ENCODE measurements at regions of chr17 and their contacts with region 1.

Region 1: DNA sequence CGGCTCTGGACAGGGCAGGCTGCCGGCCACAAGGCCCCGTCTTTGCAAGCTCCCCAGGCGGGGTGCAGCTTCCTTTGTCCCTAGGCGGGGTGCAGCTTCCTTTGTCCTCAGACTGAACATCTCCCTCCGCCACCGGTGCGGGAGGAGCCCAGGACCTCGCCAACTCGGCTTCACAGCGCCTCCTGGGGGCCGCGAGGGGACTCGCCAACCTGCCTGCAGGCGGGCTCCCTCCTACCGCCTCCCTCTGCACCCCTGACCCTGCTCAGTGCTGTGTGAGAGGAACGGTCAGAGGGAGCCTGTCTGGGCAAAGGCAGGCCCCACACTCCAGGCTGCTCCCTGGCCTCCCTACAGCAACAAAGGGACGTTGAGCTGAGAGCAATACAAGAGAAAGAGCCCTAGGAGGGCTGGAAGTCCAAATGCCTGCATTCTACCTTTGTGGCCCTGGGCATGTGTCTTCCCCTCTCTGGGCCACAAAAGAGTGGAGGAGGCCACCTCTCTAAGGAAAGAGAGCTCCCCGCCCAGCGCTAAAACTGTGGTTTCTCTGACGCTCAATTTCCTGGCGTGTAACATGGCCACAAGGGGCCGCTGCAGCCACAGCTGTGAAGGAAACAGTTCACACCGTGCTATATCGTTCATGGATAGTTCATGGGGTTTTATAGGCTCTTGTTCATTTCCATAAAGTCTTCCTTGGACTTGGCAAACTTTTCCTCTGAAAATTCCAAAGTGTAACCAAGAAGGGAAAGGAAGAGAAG is 20.9 kb upstream of the KRT19 start:
- DNase-seq: peak; percentile 91
- ATAC-seq: peak; percentile 86
- H3K4me3 Mint-ChIP-seq: no peak overlapping the region
- H3K27ac Mint-ChIP-seq: peak overlapping the region; percentile 47
- H3K4me1 Mint-ChIP-seq: peaks cover 17% of the 10 kb centered on the region
- H3K27me3 Mint-ChIP-seq: peaks cover 7% of the 10 kb centered on the region

Region 2: DNA sequence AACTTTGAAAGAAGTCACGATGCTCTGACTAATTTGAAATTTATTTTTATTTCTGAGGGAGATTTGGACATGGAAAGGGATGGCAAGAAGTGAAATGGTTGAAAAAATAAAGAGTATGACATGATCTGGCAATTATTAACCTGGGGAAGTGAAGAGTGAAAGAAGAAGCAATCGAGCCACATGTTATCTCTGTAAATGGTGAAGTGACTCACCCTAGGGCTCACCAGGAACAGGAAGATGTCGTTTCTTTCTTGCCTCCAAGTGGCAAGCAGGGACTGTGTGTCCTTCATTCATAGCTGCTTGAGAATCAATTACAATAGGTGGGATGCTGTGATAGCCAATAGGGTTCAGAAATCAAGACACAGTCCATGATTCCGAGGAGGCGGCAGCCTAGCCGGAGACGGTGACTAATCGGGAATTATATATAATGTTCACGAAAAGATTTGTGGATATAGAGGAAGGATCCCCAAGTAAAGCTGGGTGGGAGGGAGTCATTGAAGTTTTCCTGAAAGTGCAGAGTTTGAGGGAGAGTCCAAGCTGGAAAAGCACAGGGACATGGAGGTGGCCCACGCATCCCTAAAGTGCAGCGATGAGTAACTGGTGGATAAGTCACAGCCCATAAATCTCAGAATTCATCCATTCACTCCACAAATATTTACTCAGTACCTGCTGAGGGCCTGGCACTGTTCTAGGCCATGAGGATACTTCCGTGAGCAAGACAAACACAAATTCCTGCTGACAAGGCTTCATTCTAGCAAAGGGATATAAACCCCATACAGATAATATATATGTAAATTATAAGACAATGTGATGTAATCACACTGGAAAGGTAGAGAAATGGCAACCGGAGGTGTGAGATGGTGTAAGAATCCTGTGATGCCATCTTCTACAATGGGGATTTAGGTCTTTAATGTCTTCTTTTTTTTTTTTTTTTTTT is 645.6 kb before region 1 on chr17:
- CTCF ChIA-PET with region 1: interaction called, 20 read pairs
- DNase-seq: no peak
- ATAC-seq: no peak
- H3K4me3 Mint-ChIP-seq: no peak overlapping the region
- H3K27ac Mint-ChIP-seq: no peak overlapping the region
- H3K4me1 Mint-ChIP-seq: peaks cover 10% of the 10 kb centered on the region
- H3K27me3 Mint-ChIP-seq: peaks cover 51% of the 10 kb centered on the region

Region 3: GRCh38 chr17:41464682-41465081 is 84.3 kb before region 1 on chr17:
- CTCF ChIA-PET with region 1: no interaction called
- DNase-seq: no peak
- ATAC-seq: no peak
- H3K4me3 Mint-ChIP-seq: no peak overlapping the region
- H3K27ac Mint-ChIP-seq: no peak overlapping the region
- H3K4me1 Mint-ChIP-seq: no peaks in the 10 kb centered on the region
- H3K27me3 Mint-ChIP-seq: peaks cover 4% of the 10 kb centered on the region

Region 4: GRCh38 chr17:41486809-41487720 is 62.0 kb before region 1 on chr17:
- CTCF ChIA-PET with region 1: interaction called, 10 read pairs
- DNase-seq: peak; percentile 52
- ATAC-seq: no peak
- H3K4me3 Mint-ChIP-seq: no peak overlapping the region
- H3K27ac Mint-ChIP-seq: no peak overlapping the region
- H3K4me1 Mint-ChIP-seq: no peaks in the 10 kb centered on the region
- H3K27me3 Mint-ChIP-seq: peaks cover 5% of the 10 kb centered on the region

Region 5: DNA sequence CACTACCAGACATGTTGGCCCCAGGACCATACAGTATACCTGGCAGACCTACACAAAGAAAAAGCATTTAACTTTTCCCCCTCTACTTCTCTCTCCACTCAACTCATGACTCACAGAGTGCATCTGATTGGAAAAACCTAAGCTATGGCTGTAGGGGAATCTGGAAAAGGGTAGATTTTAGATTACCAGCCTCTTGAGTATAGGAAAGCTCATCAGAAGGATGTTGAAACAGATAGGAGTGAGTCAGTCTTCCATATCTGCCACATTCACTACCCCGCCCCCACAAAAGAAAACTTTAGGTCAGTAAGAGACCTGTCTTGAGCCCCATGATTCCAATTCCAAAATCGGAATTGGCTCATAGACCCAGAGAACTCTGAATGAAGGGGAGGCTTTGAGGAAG is 10.5 kb after region 1 on chr17:
- CTCF ChIA-PET with region 1: interaction called, 48 read pairs
- DNase-seq: no peak
- ATAC-seq: no peak
- H3K4me3 Mint-ChIP-seq: no peak overlapping the region
- H3K27ac Mint-ChIP-seq: no peak overlapping the region
- H3K4me1 Mint-ChIP-seq: no peaks in the 10 kb centered on the region
- H3K27me3 Mint-ChIP-seq: peaks cover 72% of the 10 kb centered on the region

Region 6: DNA sequence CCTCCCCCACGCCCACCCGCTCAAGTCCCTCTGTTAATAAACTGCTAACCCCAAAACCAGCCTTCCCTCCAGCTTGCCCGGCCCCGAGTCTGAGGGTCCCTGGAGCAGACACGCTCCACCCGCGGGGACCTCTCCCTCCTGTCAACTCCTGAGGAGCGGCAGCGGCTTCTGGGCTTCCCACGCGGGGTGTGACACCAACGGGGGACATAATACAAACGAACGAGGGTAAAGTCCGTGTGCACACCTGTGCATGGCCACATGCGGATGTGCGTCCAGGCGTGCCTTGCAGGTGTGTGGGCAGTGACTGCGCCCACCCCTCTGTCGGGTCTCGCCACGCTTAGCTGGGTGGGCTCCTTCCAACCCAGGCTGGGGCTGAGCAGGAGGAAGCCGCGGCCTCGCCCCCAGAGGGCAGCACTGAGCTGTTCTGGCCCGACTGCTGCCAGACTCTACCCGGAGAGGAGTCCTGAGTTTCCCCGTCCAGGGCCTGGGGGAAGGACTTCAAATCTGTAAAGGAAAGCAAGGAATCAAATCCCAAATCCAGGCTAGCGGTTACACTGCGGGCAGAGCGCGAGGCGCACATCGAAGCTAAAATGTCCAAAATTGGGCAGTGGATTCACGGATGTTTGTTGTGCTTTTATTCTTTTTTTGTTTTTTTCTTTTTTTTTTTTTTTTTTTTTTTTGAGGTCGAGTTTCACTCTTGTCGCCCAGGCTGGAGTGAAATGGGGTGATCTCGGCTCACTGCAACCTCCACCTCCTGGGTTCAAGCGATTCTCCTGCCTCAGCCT is 99.6 kb after region 1 on chr17:
- CTCF ChIA-PET with region 1: interaction called, 236 read pairs
- DNase-seq: peak; percentile 89
- ATAC-seq: peak; percentile 90
- H3K4me3 Mint-ChIP-seq: peak overlapping the region; percentile 55
- H3K27ac Mint-ChIP-seq: peak overlapping the region; percentile 75
- H3K4me1 Mint-ChIP-seq: peaks cover 8% of the 10 kb centered on the region
- H3K27me3 Mint-ChIP-seq: no peaks in the 10 kb centered on the region

Region 7: DNA sequence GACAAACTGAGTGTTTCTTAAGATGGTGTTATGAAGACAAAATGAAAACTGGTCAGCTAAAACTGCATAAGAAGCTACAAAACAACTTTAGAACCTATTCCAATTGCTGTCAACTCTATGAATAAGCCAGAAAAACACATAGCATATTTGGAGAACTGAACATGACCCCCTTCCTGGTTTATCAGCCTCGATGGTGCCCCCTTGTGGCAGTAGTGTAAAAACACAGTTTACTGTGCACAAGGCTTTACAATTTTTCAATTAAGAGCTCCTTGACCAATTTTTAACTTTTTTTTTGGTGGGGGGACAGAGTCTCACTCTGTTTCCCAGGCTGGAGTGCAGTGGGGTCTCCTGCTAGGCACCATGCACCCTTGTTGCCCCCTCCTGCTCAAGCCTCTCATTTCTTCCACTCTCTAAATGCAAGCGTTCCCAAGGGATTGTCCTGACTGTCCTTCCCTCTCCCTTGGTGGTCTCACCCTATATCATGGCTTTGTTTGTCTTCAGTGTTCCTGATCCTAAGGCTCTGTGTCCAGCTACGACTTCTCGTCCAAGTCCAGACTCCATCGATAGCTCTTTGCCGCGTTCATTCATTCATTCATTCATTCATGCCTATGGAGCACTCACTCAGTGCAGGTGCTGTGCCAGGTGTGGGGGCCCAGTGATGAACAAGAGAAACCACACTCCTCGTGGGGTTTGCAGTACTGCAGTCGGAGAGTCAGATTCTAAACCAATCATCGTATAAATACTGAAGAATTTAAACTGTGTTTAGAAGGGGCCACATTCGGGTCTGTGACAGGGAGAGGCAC is 147.1 kb after region 1 on chr17:
- CTCF ChIA-PET with region 1: interaction called, 11 read pairs
- DNase-seq: peak; percentile 86
- ATAC-seq: peak; percentile 14
- H3K4me3 Mint-ChIP-seq: no peak overlapping the region
- H3K27ac Mint-ChIP-seq: peak overlapping the region; percentile 72
- H3K4me1 Mint-ChIP-seq: peaks cover 21% of the 10 kb centered on the region
- H3K27me3 Mint-ChIP-seq: peaks cover 4% of the 10 kb centered on the region

Measured in activated CD8-positive, alpha-beta memory T cell treated with anti-CD3 and anti-CD28 coated beads, Interleukin-2, amount 10 ng/mL, durations not matched to agents 7 days and 5 days (primary cell).